Colonic mucosa (tissue), 4 donors: ENCODE measurements at regions of chr11 and their contacts with region 1.

Region 1: GRCh38 chr11:100930185-100930778 is 199.3 kb downstream of the PGR start:
- DNase-seq: no peak
- H3K4me3 ChIP-seq: no peak overlapping the region
- H3K27ac ChIP-seq: no peak overlapping the region
- H3K4me1 ChIP-seq: no peaks in the 10 kb centered on the region
- H3K27me3 ChIP-seq: no peaks in the 10 kb centered on the region
- CTCF ChIP-seq: peak; percentile 40

Region 2: DNA sequence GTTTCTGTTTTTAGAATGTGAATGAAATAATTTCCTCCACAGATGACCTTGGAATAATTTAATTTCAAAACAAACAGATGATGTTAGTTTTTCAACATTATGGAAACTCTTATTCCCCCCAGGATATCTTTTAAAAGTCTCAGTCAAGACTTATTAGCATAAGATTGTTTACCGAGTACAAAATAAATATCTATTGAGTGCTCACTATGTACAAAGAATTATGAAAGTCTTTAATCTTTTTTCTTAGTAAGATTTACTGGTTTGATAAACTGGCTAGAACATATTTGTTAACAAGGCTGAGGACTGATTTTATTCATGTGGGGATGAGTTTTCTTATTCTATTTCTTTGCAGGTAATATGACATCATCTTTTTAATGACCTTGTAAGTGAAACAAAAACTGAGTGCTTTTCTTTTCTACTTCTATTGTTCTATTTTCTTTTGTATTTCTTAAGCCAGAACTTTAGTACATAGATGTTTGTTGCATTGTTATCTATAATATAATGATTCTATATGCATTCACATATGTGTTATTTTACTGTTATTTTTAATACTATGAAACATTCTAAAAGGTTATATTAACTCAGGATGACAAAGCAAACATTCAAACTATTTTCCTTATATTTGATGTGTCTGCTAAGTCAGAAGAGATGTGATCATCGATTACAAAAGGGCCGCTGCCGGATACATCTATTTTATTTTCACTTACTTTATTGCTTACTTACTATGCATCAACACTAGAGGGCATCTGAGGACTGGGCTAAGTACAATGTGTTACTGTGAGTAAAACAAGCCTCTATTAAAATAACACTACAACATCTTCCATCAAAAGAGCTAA is 354.2 kb before region 1 on chr11:
- intact Hi-C with region 1: loop called (anchors 5 kb)
- DNase-seq: peak; percentile 29
- H3K4me3 ChIP-seq: no peak overlapping the region
- H3K27ac ChIP-seq: no peak overlapping the region
- H3K4me1 ChIP-seq: no peaks in the 10 kb centered on the region
- H3K27me3 ChIP-seq: no peaks in the 10 kb centered on the region
- CTCF ChIP-seq: peak; percentile 62

Region 3: DNA sequence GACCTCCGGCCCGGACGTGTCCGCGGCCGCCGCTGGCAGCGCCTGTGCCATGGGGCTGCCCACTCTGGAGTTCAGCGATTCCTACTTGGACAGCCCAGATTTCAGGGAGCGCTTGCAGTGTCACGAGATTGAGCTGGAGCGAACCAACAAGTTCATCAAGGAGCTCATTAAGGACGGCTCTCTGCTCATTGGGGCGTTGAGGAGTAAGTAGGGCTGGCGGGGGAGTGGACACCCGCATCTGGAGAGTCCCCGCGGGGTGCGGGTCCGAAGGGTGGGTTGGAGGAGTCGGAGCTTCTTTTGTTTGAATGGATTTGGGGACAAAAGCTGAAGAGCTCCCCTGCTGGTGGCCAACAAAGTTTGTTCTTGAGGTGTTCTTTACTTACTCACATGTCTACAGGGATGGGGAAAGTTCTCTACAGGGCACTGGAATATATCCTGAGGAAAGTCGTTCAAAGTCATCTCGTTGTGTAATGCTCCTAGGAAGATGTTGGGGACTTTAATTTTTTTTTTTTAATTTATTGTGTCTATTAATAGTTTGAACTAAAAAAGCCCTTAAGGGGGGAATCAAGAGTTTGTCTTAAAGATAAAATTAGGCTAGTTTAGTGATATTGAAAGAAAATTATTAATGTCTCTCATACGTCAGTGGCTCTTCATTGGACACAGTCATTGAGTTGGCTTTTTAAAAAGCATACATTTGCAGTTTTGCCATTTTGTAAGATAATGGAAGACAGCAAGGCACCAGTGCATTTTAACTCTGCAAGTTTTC is 242.5 kb before region 1 on chr11:
- intact Hi-C with region 1: loop called (anchors 10 kb)
- DNase-seq: peak; percentile 71
- H3K4me3 ChIP-seq: peak overlapping the region; percentile 72
- H3K27ac ChIP-seq: peak overlapping the region; percentile 66
- H3K4me1 ChIP-seq: no peaks in the 10 kb centered on the region
- H3K27me3 ChIP-seq: no peaks in the 10 kb centered on the region
- CTCF ChIP-seq: peak; percentile 62

Region 4: GRCh38 chr11:101727451-101727850 is 797.2 kb after region 1 on chr11:
- intact Hi-C with region 1: no loop called
- DNase-seq: no peak
- H3K4me3 ChIP-seq: no peak overlapping the region
- H3K27ac ChIP-seq: no peak overlapping the region
- H3K4me1 ChIP-seq: no peaks in the 10 kb centered on the region
- H3K27me3 ChIP-seq: no peaks in the 10 kb centered on the region
- CTCF ChIP-seq: no peak